Natural killer cell (primary cell): ENCODE measurements at regions of chrX and their contacts with region 1.

Region 1: DNA sequence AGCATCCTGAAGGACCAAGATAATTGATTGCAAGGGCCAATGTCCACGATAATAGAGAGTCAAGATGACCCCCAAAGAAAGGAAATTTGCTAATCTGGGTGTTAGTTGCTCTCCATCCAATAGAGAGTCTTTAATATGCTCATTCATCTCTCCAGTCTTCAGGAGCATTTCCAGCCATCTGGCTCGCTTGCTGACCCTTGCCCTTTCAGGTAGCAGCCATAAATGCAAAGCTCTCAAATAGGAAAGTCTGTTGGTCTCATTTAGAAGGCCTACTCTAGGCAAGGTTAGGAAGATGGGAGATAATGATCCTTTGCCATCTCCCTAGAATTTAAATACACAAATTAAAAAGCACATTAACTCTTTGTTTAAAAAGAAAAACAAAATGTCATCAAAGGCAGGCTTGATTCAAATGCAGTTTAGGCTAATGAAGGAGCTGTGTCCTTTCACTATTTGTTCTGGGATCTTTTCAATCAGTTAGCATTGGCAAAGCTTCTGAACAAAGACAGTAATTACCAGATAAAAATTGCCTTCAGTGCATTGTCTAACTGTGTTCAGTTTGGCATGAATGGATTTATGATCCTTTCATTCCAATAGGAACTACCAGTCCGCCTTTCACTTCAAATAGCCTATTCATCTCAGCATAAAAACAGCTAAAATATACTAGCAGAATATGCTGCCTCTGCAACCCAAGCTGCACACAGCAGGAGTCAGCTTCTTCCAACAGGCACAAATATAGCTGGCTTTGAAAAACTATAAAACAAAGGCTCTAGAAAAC is 49.6 kb upstream of the ATXN3L start:
- DNase-seq: no peak
- ATAC-seq: no peak
- H3K4me3 ChIP-seq: no peak overlapping the region
- H3K4me3 Mint-ChIP-seq: no peak overlapping the region
- H3K27ac ChIP-seq: no peak overlapping the region
- H3K27ac Mint-ChIP-seq: no peak overlapping the region
- H3K4me1 ChIP-seq: no peaks in the 10 kb centered on the region
- H3K4me1 Mint-ChIP-seq: peaks cover 14 to 15% of the 10 kb centered on the region in 2 donors
- H3K27me3 ChIP-seq: no peaks in the 10 kb centered on the region
- H3K27me3 Mint-ChIP-seq: peaks cover 0 to 40% of the 10 kb centered on the region in 2 donors
- CTCF ChIP-seq: no peak

Region 2: DNA sequence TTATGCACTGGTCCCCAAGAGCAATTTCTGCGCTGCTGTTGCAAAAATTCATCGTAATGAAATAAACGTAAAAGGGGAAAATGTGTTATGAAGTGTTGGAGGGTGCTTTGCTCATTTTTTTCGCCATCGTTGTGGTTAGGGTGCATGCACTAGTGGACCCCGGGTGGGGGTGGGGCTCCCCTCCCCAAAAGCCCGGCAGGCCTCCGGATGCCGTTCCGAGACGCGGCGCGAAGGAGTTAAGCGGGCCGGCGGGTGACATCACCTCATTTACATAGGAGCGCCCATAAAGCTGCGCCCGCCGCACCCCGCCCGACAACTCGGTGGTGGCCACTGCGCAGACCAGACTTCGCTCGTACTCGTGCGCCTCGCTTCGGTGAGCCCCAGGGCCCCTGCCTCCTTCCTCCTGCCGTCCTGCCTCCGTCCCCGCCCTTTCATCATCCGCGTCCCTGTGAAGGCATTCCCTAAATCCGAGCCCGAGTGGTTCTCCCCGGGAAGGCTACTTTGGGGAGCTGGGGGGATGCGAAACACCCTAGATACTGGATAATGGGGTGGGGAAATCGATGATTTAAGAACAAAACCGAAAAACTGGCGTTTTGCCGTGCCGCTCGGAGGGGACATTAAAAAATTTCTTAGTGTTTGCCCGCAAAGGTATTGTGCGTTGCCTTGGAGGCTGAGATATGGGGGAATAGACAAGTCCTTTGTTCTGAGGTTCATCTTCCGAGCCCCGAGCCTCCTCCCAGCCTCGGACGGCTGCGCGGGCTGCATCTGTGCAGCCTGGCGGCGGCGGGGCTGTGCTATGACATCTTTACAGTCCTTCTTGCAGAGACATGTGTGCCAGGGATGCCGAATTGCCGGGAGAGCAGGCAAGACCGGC is 394.4 kb before region 1 on chrX and contains the start of gene TMSB4X:
- intact Hi-C with region 1: loop called (anchors 5 kb)
- DNase-seq: peak; percentile 79 to 88
- ATAC-seq: peak; percentile 58 to 84 (median 72)
- H3K4me3 ChIP-seq: peak within 1 kb of the TSS; percentile 94
- H3K4me3 Mint-ChIP-seq: peak within 1 kb of the TSS; percentile 95
- H3K27ac ChIP-seq: peak within 1 kb of the TSS; percentile 89
- H3K27ac Mint-ChIP-seq: peak within 1 kb of the TSS; percentile 94 to 97
- H3K4me1 ChIP-seq: peaks cover 41% of the 10 kb centered on the region
- H3K4me1 Mint-ChIP-seq: peaks cover 56 to 79% of the 10 kb centered on the region in 2 donors
- H3K27me3 ChIP-seq: no peaks in the 10 kb centered on the region
- H3K27me3 Mint-ChIP-seq: no peaks in the 10 kb centered on the region
- CTCF ChIP-seq: no peak
- total RNA-seq, gene TMSB4X: 5,049 to 6,005 (median 5,892) TPM